KBM-7 (cell line): ENCODE measurements at regions of chr7 and their contacts with region 1.

Region 1: DNA sequence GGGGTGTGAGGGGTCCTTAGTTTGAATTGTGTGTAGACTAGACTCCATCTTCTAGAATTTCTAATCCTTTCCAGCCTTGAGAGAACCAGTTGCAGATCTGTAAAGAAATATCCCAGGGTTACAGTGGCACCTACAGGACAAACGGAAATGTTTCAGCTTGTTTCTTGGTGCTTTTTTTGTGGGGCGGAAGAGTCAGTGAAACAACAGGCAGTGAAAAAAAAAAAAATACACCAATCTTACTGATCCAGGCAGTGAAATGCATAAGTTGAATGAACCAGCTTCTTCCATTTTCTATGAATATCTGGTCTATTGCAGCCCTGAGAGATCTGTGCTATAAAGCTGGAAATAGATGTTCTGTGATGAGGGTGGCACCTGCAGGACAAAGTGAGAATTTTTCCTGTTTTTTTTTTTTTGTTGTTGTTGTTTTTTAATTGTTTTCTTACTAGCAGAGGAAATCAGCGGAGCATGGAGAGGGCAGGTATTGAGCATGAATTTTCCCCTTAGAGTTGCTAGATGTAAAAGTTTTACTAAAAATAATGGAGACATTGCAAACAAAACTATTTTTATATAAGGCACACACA is 81.9 kb upstream of the DYNC1I1 start:
- DNase-seq: peak; percentile 78

Region 2: DNA sequence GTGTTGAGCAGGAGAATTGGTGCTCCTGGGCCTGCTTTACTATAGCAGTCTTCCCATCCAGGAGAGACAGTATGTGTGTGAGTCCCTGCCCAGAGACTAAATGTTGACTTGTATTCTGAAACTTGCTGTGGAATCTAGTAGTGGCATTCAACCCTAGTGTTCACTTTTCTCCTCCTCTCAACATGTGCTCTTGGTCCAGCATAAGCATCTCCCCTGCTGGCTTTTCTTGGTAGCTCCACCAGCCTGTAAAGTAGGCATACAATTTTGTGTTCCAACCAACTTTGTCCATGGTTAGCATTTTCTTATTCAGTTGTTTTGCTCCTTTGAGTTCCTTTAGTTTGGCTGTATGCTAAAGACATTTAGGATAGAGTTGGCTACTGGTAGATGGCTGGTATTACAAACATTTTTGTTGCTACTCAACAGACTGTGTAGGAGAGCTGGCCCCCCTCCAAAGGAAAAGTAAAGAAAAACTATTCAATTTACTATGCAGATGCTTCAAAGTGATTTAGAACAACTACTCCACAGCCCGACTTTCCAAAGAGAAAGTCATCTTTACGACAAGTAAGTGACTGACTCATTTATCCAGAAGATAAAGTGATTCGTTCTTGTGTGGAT is 158.7 kb before region 1 on chr7:
- in situ Hi-C with region 1: loop called (anchors 10 kb)
- DNase-seq: no peak

Region 3: DNA sequence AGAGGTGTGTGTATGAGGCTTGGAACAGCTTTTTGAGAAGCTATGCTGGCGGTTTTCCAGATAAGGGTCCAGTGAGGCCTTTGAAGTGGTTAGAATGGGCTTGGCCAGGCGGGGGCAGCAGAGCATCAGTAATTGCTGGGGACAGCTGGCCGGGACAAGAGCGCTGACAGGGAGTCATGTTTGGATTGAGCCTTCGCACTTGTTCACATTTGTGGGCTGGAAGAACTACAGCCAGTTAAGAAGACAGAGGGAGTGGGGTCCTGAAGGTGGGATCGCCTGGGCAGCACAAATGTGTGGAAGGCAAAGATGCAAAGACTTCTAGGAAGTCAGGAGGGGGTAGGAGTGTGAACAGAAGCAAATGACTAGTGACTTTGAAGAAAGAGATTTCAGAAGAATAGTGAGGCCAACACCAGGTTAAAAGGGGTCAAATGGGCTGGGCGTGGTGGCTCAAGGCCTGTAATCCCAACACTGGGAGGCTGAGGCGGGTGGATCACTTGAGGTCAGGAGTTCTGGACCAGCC is 1414.3 kb after region 1 on chr7:
- in situ Hi-C with region 1: no loop called
- DNase-seq: peak; percentile 90